Naive thymus-derived CD8-positive, alpha-beta T cell (primary cell): ENCODE measurements at regions of chr7 and their contacts with region 1.

Region 1: DNA sequence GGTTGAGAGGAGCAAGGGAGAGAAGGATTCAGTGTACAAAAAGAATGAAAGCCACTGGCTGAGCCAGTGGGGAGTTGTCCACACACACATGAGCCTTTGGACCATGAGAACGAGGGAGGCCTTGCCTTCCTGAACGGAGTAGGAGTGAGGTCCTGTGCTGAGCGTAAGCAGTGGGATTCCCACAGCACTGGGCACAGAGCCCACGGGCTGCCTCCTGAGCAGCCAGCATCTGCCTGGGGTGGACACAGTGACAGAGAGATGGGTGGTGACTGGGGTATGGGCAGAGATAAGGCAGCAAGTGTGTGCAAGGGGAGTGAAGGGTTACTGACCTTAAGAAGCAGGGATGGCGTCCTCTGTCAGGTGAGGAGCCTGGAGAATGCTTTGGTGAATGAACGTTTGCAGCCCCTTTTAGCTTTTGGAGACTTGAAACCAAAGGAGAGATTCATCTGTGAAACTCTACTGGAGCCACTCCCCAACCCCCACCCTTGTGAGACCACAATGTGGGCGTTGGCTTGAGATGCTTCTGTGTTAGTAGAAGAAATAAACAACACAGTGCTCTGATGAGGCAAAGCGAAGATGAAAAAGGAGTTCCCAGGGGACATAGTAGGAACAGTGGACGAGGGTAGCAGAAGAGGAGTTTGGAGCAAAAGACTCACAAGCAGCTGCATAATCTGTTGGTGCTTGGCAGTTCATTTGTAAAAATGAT is 56.5 kb downstream of the FIGNL1 start:
- DNase-seq: peak in 9 of 10 donors; percentile 33 to 75 (median 48)
- ATAC-seq: peak; percentile 61 to 85
- H3K4me3 Mint-ChIP-seq: peak overlapping the region; percentile 45 to 89 (median 83)
- H3K27ac Mint-ChIP-seq: peak overlapping the region; percentile 92 to 99 (median 96)
- H3K4me1 Mint-ChIP-seq: peaks cover 63 to 98% (median 89%) of the 10 kb centered on the region in 4 donors
- H3K27me3 Mint-ChIP-seq: no peaks in the 10 kb centered on the region

Region 2: DNA sequence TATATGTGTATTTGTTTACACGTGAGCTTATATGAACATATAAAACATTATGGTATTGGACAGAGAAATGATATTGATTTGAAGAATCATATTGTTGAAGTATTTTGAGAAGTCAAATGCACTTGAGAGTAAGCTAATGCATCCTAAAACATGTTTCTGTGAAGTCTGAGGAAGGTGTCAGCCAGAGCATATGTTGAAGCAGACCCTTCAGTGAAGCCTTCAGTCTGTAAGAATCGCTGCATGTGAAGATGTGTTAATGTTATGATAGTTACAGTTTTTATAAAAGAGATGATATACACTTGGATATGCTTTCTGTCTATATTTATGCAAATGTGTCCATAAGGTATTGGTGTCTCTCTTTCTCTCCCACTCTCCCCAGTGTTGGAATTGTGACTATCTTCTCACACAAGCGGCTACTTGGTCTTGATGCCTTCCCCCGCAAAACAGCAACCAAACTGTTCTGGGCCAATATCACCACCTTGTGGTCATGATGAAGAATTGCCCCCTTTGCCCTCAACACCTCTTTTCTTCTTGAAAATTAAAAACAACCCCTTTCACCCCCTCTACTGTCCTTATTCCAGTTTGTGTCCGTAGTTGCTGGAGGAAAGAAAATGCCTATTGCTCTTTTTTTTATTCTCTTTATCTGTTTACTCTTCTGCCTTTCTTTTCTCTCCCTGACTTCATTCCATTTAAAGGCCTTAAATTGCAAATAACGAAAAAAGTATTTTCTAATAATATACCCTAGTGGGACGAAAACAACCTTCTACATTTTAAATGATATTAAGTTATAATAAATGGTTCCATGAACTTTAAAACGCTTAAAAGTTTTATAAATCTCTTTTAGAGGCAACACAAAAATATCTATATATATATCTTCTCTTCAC is 24.3 kb before region 1 on chr7:
- POLR2A ChIA-PET with region 1: interaction called, 10 read pairs
- DNase-seq: peak in 8 of 10 donors; percentile 49 to 86 (median 72)
- ATAC-seq: peak; percentile 44 to 66
- H3K4me3 Mint-ChIP-seq: peak overlapping the region in 9 of 10 donors; percentile 45 to 82 (median 61)
- H3K27ac Mint-ChIP-seq: peak overlapping the region in 9 of 10 donors; percentile 37 to 100 (median 89)
- H3K4me1 Mint-ChIP-seq: peaks cover 42 to 99% (median 96%) of the 10 kb centered on the region in 4 donors
- H3K27me3 Mint-ChIP-seq: no peaks in the 10 kb centered on the region

Region 3: DNA sequence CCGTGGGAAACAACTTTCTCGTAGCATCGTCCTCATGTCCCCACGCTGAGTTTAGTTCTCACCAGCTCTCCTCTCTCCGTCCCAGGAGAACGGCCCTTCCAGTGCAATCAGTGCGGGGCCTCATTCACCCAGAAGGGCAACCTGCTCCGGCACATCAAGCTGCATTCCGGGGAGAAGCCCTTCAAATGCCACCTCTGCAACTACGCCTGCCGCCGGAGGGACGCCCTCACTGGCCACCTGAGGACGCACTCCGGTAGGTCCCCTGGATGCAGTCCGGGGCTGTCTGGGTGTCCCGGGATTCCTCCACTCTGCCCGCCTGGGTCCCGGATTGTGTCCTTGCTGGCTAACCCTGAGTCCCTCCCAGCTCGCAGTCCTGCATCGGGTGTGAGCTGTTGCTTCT is 11.2 kb before region 1 on chr7:
- POLR2A ChIA-PET with region 1: interaction called, 14 read pairs
- DNase-seq: no peak
- ATAC-seq: no peak
- H3K4me3 Mint-ChIP-seq: peak overlapping the region in 3 of 10 donors; percentile 29 to 49 (median 39)
- H3K27ac Mint-ChIP-seq: peak overlapping the region in 9 of 10 donors; percentile 34 to 93 (median 82)
- H3K4me1 Mint-ChIP-seq: peaks cover 35 to 91% (median 84%) of the 10 kb centered on the region in 4 donors
- H3K27me3 Mint-ChIP-seq: no peaks in the 10 kb centered on the region

Region 4: GRCh38 chr7:50560865-50561351 is 167.2 kb after region 1 on chr7:
- POLR2A ChIA-PET with region 1: no interaction called
- DNase-seq: no peak
- ATAC-seq: no peak
- H3K4me3 Mint-ChIP-seq: no peak overlapping the region
- H3K27ac Mint-ChIP-seq: no peak overlapping the region
- H3K4me1 Mint-ChIP-seq: no peaks in the 10 kb centered on the region
- H3K27me3 Mint-ChIP-seq: peaks cover 7 to 29% (median 21%) of the 10 kb centered on the region in 5 donors